ENCODE measurements at regions of chr9 and their contacts with region 1.

Region 1: GRCh38 chr9:133144137-133144903 is 19.4 kb downstream of the GBGT1 start:
- DNase-seq: peak; percentile 67 to 97 (median 87)
- ATAC-seq: peak; percentile 60 to 74 (median 68)
- H3K4me3 ChIP-seq: peak overlapping the region in 1 of 2 donors; percentile 36
- H3K4me3 Mint-ChIP-seq: peak overlapping the region; percentile 70 to 75 (median 72)
- H3K27ac ChIP-seq: peak overlapping the region; percentile 100
- H3K27ac Mint-ChIP-seq: peak overlapping the region; percentile 85 to 93
- H3K4me1 ChIP-seq: peaks cover 21 to 89% of the 10 kb centered on the region in 2 experiments
- H3K4me1 Mint-ChIP-seq: peaks cover 63 to 81% (median 71%) of the 10 kb centered on the region in 3 donors
- H3K27me3 ChIP-seq: no peaks in the 10 kb centered on the region
- H3K27me3 Mint-ChIP-seq: no peaks in the 10 kb centered on the region

Region 2: GRCh38 chr9:133023117-133023890 is 121.0 kb before region 1 on chr9:
- CTCF ChIA-PET with region 1: interaction called in 1 of 2 experiments, 11 read pairs
- POLR2A ChIA-PET with region 1: no interaction called
- DNase-seq: peak in 18 of 35 experiments; percentile 4 to 41 (median 15)
- ATAC-seq: peak in 2 of 4 experiments; percentile 18 to 37
- H3K4me3 ChIP-seq: no peak overlapping the region
- H3K4me3 Mint-ChIP-seq: no peak overlapping the region
- H3K27ac ChIP-seq: no peak overlapping the region
- H3K27ac Mint-ChIP-seq: no peak overlapping the region
- H3K4me1 ChIP-seq: peaks cover 2 to 13% of the 10 kb centered on the region in 2 experiments
- H3K4me1 Mint-ChIP-seq: peaks cover 5 to 17% (median 15%) of the 10 kb centered on the region in 3 donors
- H3K27me3 ChIP-seq: peaks cover 0 to 9% of the 10 kb centered on the region in 2 experiments
- H3K27me3 Mint-ChIP-seq: no peaks in the 10 kb centered on the region

Region 3: DNA sequence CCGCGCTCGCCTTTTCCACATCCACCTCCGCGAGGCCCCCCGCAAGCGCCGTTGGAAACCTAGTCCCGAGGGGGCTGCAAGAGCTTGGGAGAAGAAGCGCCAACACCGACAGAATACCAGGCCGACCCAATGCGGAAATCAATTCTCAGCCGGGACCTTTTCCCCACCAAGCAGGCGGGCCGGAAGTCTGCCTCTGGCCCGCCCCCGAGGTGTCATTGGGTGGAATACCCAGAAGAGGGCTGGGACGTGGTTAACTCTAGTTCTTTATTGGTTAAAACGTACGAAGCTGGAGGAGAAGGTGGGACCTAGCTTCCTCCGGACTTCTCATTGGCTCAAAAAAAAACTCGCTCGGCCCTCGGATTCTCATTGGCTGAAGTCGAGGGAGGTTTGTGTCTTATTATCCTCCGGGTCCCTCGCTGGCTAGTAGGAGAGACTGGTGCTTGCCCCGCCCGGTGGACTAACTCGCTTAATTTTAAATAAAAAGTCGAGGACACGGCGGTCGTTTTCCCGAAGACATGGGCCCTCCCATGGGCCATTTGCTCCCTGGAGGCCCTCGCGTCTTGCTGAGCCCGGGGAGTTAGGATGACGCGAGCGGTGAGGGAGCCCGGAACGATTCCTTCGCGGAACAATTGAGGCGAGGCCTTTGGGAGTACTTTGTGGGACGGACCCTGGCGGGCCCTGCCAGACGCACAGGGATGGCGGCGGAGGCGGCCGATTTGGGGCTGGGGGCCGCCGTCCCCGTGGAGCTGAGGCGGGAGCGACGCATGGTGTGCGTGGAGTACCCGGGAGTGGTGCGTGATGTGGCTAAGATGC is 113.8 kb before region 1 on chr9 and contains the start of gene GTF3C5:
- CTCF ChIA-PET with region 1: interaction called in 1 of 2 experiments, 14 read pairs
- POLR2A ChIA-PET with region 1: interaction called in 1 of 2 experiments, 7 read pairs
- DNase-seq: peak; percentile 82 to 96 (median 92)
- ATAC-seq: peak; percentile 96 to 97 (median 96)
- H3K4me3 ChIP-seq: peak within 1 kb of the TSS; percentile 86 to 87
- H3K4me3 Mint-ChIP-seq: peak within 1 kb of the TSS; percentile 90 to 99 (median 97)
- H3K27ac ChIP-seq: peak within 1 kb of the TSS; percentile 84
- H3K27ac Mint-ChIP-seq: peak within 1 kb of the TSS; percentile 99
- H3K4me1 ChIP-seq: peaks cover 14 to 31% of the 10 kb centered on the region in 2 experiments
- H3K4me1 Mint-ChIP-seq: peaks cover 41 to 68% (median 60%) of the 10 kb centered on the region in 3 donors
- H3K27me3 ChIP-seq: no peaks in the 10 kb centered on the region
- H3K27me3 Mint-ChIP-seq: no peaks in the 10 kb centered on the region
- total RNA-seq, gene GTF3C5: 46.6 to 91.2 (median 80.0) TPM

Region 4: GRCh38 chr9:133103183-133103986 is 40.9 kb before region 1 on chr9:
- CTCF ChIA-PET with region 1: interaction called, 8 to 13 read pairs
- POLR2A ChIA-PET with region 1: no interaction called
- DNase-seq: peak in 29 of 35 experiments; percentile 17 to 68 (median 45)
- ATAC-seq: peak; percentile 46 to 72 (median 52)
- H3K4me3 ChIP-seq: no peak overlapping the region
- H3K4me3 Mint-ChIP-seq: no peak overlapping the region
- H3K27ac ChIP-seq: peak overlapping the region; percentile 29
- H3K27ac Mint-ChIP-seq: peak overlapping the region in 1 of 2 donors; percentile 22
- H3K4me1 ChIP-seq: peaks cover 0 to 8% of the 10 kb centered on the region in 2 experiments
- H3K4me1 Mint-ChIP-seq: peaks cover 0 to 2% (median 0%) of the 10 kb centered on the region in 3 donors
- H3K27me3 ChIP-seq: no peaks in the 10 kb centered on the region
- H3K27me3 Mint-ChIP-seq: no peaks in the 10 kb centered on the region

Region 5: DNA sequence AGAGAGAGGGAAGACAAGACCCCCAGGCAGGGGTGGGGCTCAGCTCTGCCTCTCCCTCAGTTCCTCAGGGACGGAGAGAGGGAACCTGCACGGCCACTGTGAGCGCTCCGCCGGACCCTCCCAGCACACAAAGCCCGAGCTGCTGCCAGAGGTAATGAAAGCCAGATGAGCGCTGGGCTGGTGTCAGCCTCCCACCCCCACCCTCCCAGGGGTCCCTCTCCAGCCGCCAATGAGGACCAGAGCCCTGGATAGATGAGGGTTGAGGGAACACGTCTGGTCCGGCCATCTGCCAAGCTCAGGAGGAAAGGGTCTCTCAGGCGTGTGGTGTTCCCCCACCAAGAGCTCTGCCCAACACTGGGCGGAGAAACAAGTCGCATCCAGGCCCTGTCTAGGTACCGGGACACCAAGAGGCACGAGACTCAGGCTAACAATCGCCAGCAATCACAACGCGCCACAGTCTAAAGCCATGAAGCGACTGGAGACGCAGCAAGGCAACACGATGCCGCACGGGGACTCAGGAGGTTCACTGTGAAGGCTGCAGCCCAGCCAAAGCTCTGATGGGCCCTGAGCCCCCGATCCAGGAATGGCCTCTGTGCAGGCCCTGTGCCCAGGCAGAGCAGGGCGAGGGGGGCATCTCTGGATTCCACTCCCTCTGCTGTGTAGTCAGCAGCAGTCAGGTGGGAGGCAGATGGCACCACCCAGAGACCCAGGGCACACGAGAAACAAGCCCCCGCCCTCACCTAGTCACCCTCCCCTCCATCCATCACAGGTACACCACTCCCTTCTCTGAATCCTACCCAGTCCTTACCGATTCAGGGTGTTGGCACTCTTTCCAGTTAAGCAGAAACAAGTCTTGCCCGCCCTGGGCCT is 24.6 kb before region 1 on chr9:
- CTCF ChIA-PET with region 1: interaction called, 4 to 10 read pairs
- POLR2A ChIA-PET with region 1: interaction called, 7 to 9 read pairs
- DNase-seq: no peak
- ATAC-seq: no peak
- H3K4me3 ChIP-seq: no peak overlapping the region
- H3K4me3 Mint-ChIP-seq: peak overlapping the region; percentile 44 to 78 (median 68)
- H3K27ac ChIP-seq: no peak overlapping the region
- H3K27ac Mint-ChIP-seq: no peak overlapping the region
- H3K4me1 ChIP-seq: peaks cover 3 to 93% of the 10 kb centered on the region in 2 experiments
- H3K4me1 Mint-ChIP-seq: peaks cover 44 to 87% (median 62%) of the 10 kb centered on the region in 3 donors
- H3K27me3 ChIP-seq: no peaks in the 10 kb centered on the region
- H3K27me3 Mint-ChIP-seq: no peaks in the 10 kb centered on the region

Region 6: DNA sequence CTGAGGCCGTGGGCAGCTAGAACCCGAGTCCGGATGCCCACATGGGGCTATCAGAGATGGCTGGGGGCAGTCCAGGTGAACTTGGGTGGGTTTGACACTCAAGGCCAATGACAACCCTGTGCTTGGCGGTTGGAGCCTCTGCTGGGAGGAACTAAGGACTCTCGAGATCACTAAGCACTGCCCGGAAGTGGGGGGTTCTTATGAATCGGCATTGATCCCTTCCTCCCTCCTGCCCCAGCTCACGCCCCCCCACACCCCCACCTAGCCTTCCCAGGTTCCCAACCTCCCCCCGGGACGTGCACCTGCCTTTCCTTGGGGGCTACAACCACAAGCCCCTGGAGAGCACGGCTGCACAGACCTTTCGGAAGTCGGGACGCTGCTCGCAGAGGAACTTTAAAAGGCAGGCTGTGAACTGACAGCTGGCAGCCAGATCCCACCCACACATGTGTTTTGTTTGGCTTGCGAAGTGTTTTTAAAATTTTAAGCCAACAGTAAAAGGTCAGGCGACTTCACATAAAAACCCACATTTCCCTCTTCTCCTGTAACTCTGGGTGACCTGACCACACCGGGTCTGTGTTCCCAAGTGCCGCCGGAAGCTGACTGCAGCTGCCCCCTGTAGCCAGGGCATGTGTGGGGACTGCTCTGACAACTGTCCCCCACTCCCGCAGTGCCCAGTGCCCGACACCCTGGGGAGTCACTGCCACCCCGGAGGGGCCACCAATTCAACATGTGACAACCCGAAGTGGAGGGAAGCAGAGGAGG is 18.2 kb before region 1 on chr9:
- CTCF ChIA-PET with region 1: interaction called, 4 to 45 read pairs
- POLR2A ChIA-PET with region 1: interaction called in 1 of 2 experiments, 9 read pairs
- DNase-seq: peak in 3 of 35 experiments; percentile 23 to 40 (median 39)
- ATAC-seq: no peak
- H3K4me3 ChIP-seq: no peak overlapping the region
- H3K4me3 Mint-ChIP-seq: peak overlapping the region; percentile 53 to 83 (median 77)
- H3K27ac ChIP-seq: peak overlapping the region; percentile 100
- H3K27ac Mint-ChIP-seq: peak overlapping the region; percentile 86 to 88
- H3K4me1 ChIP-seq: peaks cover 9 to 95% of the 10 kb centered on the region in 2 experiments
- H3K4me1 Mint-ChIP-seq: peaks cover 61 to 90% (median 72%) of the 10 kb centered on the region in 3 donors
- H3K27me3 ChIP-seq: no peaks in the 10 kb centered on the region
- H3K27me3 Mint-ChIP-seq: no peaks in the 10 kb centered on the region

Region 7: DNA sequence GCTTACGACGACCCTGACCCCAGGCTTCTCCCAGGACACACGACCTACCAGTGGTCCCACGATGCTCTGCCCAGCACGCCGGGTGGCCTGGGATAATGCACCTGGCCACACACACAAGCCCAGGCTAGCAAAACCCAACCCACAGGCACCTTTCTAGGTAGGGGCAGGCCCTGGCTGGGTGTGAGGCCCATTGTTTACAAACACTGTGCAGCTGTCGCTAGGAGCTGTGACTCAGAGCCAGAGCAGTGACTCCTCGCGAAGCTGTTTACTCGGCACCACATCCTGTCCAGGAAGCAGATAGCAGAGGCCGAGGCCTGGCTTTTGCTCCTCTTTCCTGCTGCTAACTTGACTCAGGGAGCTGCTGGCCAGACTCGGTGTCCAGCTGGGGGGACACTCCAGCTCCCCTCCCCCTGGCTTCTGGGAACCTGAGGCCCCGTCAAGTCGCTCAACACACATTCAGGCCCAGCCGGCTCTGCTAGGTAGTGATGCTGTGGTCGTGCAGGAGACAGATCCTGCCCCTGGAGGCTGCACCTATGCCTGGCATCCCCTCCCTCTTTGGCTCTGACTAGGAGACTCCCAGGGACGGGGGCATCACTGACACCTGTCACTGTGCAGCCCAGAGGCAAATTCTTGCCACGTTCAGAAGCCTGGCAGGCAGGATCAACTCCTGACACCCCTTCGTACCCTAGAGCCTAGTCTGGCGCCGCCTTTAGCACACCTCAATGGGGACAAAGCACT is 10.5 kb before region 1 on chr9:
- CTCF ChIA-PET with region 1: interaction called, 4 to 45 read pairs
- POLR2A ChIA-PET with region 1: interaction called, 16 to 17 read pairs
- DNase-seq: peak; percentile 64 to 96 (median 90)
- ATAC-seq: peak; percentile 87 to 89 (median 88)
- H3K4me3 ChIP-seq: peak overlapping the region; percentile 7 to 18
- H3K4me3 Mint-ChIP-seq: peak overlapping the region; percentile 64 to 83 (median 80)
- H3K27ac ChIP-seq: peak overlapping the region; percentile 100
- H3K27ac Mint-ChIP-seq: peak overlapping the region; percentile 100
- H3K4me1 ChIP-seq: peaks cover 31 to 98% of the 10 kb centered on the region in 2 experiments
- H3K4me1 Mint-ChIP-seq: peaks cover 65 to 86% (median 71%) of the 10 kb centered on the region in 3 donors
- H3K27me3 ChIP-seq: no peaks in the 10 kb centered on the region
- H3K27me3 Mint-ChIP-seq: no peaks in the 10 kb centered on the region

Region 8: GRCh38 chr9:133252301-133252780 is 108.0 kb after region 1 on chr9:
- CTCF ChIA-PET with region 1: no interaction called
- POLR2A ChIA-PET with region 1: no interaction called
- DNase-seq: peak in 1 of 35 experiments; percentile 15
- ATAC-seq: no peak
- H3K4me3 ChIP-seq: no peak overlapping the region
- H3K4me3 Mint-ChIP-seq: no peak overlapping the region
- H3K27ac ChIP-seq: no peak overlapping the region
- H3K27ac Mint-ChIP-seq: no peak overlapping the region
- H3K4me1 ChIP-seq: peaks cover 10 to 12% of the 10 kb centered on the region in 2 experiments
- H3K4me1 Mint-ChIP-seq: no peaks in the 10 kb centered on the region
- H3K27me3 ChIP-seq: peaks cover 0 to 42% of the 10 kb centered on the region in 2 experiments
- H3K27me3 Mint-ChIP-seq: peaks cover 10 to 19% of the 10 kb centered on the region in 2 donors

Region 9: GRCh38 chr9:134178768-134179551 is 1034.6 kb after region 1 on chr9:
- CTCF ChIA-PET with region 1: no interaction called
- POLR2A ChIA-PET with region 1: no interaction called
- DNase-seq: peak in 1 of 35 experiments; percentile 3
- ATAC-seq: no peak
- H3K4me3 ChIP-seq: no peak overlapping the region
- H3K4me3 Mint-ChIP-seq: no peak overlapping the region
- H3K27ac ChIP-seq: no peak overlapping the region
- H3K27ac Mint-ChIP-seq: no peak overlapping the region
- H3K4me1 ChIP-seq: peaks cover 10 to 34% of the 10 kb centered on the region in 2 experiments
- H3K4me1 Mint-ChIP-seq: peaks cover 18 to 32% (median 28%) of the 10 kb centered on the region in 3 donors
- H3K27me3 ChIP-seq: peaks cover 0 to 41% of the 10 kb centered on the region in 2 experiments
- H3K27me3 Mint-ChIP-seq: peaks cover 3 to 19% of the 10 kb centered on the region in 2 donors